Heart left ventricle (tissue), 16 donors: ENCODE measurements at regions of chr7 and their contacts with region 1.

Region 1: DNA sequence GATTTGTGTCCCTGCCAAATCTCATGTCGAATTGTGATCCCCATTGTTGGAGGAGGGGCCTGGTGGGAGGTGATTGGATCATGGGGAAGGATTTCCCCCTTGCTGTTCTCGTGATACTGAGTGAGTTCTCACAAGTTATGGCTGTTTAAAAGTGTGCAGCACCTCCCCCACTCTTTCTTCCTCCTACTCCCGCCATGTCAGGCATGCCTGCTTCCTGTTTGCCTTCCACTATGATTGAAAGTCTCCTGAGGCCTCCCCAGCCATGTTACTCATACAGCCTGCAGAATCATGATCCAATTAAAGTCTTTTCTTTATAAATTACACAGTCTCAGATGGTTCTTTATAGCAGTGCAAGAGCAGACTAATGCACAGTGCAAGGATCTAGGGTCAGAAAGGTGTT is 75.4 kb downstream of the CALD1 start:
- DNase-seq: peak in 3 of 5 donors; percentile 37 to 47 (median 41)
- ATAC-seq: peak in 3 of 4 donors; percentile 38 to 65 (median 62)
- H3K4me3 ChIP-seq: no peak overlapping the region
- H3K27ac ChIP-seq: peak overlapping the region in 8 of 12 donors; percentile 1 to 75 (median 64)
- H3K4me1 ChIP-seq: peaks cover 4 to 73% (median 42%) of the 10 kb centered on the region in 12 donors
- H3K27me3 ChIP-seq: no peaks in the 10 kb centered on the region
- CTCF ChIP-seq: no peak
- POLR2A ChIP-seq: no peak

Region 2: DNA sequence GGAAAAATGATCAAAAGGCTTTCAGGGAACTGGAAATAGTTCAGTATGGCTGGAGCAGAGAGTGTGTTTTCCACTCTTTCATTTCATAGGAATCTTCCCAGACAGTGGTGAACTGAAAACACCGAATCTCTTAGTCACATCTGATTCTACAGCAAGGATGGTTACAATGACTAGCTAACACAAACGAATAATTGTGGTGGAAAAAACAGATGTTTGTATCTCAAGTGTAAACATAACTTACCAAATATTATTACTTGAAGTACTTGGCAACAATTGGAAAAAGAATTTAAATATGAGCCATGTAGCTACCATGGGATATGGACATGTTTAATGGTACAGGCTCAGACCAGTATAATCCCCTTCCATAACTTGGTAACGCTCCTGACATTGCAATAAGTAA is 229.3 kb before region 1 on chr7:
- intact Hi-C with region 1: no loop called
- DNase-seq: no peak
- ATAC-seq: no peak
- H3K4me3 ChIP-seq: no peak overlapping the region
- H3K27ac ChIP-seq: no peak overlapping the region
- H3K4me1 ChIP-seq: no peaks in the 10 kb centered on the region
- H3K27me3 ChIP-seq: peaks cover 0 to 26% (median 3%) of the 10 kb centered on the region in 9 donors
- CTCF ChIP-seq: no peak
- POLR2A ChIP-seq: no peak

Region 3: GRCh38 chr7:134701272-134701671 is 153.5 kb before region 1 on chr7:
- intact Hi-C with region 1: loop called in 1 of 10 experiments (anchors 10 kb)
- DNase-seq: no peak
- ATAC-seq: no peak
- H3K4me3 ChIP-seq: no peak overlapping the region
- H3K27ac ChIP-seq: no peak overlapping the region
- H3K4me1 ChIP-seq: peaks cover 0 to 18% (median 0%) of the 10 kb centered on the region in 12 donors
- H3K27me3 ChIP-seq: no peaks in the 10 kb centered on the region
- CTCF ChIP-seq: peak in 6 of 12 donors; percentile 13 to 36 (median 22)
- POLR2A ChIP-seq: no peak